H1 (cell line): ENCODE measurements at regions of chr10 and their contacts with region 1.

Region 1: DNA sequence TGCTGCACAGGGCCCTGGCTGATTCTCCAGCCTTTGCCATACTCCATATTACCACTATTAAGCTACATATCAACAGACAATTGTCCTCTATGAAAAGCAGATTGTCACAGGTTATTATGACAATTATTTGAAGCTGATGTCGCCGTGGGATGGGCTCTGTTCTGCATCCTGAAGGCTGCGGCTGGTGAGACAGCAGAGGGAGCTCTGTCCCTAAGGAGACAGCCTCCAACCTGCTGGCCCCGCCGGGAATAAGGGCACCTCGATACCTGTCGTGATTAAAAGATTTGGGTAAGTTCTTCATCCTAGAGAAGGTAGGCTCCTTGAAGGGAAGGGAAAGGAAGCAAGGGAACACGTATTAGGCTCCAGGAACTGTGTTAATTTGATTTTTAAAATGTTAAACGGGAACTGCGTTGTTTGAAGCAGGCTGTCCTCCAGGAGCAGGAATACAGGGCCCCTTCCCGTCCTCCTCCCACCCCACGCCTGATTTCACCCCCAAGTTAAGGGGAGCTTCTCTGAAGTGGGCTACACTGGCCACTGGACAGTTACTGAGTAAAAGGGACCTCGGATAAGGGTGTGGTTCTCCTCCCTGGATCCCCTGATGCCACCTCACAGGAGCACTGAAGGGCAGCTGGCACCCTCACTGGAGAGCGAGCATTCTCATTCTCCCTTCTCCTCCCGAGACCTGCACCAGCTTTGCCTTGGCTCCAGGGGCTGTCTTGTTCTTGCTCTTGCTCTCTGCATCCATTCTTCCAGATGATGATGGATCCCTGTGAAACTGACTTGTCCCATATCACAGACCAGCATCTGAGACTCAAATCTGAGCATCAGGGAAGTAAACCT is 11.8 kb upstream of the TIAL1 start:
- DNase-seq: peak in 1 of 2 experiments; percentile 64
- H3K4me3 ChIP-seq: no peak overlapping the region
- H3K27ac ChIP-seq: no peak overlapping the region
- H3K4me1 ChIP-seq: no peaks in the 10 kb centered on the region
- H3K27me3 ChIP-seq: no peaks in the 10 kb centered on the region
- CTCF ChIP-seq: peak; percentile 69 to 82 (median 76)
- EP300 ChIP-seq: no peak
- POLR2A ChIP-seq: no peak
- RAD21 ChIP-seq: peak; percentile 79 to 85

Region 2: DNA sequence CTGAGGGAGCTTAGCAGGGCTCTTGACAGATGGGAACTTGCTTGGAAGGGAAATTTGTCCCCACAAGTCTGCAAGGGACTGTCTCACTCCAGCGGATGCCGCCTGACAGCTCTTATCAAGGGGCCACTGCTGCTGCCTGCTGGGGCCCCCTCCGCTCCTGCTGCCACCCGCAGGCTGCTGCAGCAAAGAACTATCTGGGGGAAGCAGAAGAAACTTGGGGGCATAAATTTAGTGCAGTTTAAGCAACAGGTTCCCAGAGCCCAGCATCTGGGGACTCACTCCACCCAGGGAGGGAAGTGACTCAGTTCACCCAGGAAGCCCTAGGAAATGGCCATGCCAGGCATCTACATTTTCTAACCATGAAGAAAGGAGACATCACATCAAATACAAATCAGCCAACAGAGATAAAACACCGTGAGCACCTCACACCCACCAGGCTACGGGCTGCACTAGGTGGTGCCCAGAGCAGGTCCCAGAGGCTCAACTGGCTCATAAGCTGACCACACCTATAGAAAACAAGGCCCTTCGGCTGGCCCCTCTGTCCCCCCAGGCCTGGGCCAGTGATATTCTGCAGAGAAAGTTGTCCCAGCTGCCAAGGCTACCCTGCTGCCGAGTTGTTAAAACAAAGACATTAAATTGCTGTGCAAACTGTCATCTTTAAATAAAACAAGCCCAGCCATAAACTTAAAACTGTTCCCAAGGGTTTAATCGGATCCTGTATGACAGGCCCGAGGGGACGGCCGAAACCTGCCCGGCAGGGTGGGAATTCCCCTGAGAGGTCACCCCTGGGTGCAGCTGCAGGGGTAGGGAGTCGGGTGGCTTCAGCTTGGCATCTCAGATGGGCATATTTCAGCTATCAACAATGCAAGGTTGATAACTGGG is 69.7 kb before region 1 on chr10:
- CTCF ChIA-PET with region 1: no interaction called
- POLR2A ChIA-PET with region 1: no interaction called
- DNase-seq: no peak
- H3K4me3 ChIP-seq: no peak overlapping the region
- H3K27ac ChIP-seq: no peak overlapping the region
- H3K4me1 ChIP-seq: peaks cover 2 to 10% (median 8%) of the 10 kb centered on the region in 4 experiments; a peak in 6 of 7 replicates
- H3K27me3 ChIP-seq: peaks cover 17 to 38% (median 26%) of the 10 kb centered on the region in 4 experiments
- CTCF ChIP-seq: no peak
- EP300 ChIP-seq: no peak
- POLR2A ChIP-seq: no peak
- RAD21 ChIP-seq: peak in 1 of 2 experiments; percentile 13; a peak in 1 of 4 replicates

Region 3: DNA sequence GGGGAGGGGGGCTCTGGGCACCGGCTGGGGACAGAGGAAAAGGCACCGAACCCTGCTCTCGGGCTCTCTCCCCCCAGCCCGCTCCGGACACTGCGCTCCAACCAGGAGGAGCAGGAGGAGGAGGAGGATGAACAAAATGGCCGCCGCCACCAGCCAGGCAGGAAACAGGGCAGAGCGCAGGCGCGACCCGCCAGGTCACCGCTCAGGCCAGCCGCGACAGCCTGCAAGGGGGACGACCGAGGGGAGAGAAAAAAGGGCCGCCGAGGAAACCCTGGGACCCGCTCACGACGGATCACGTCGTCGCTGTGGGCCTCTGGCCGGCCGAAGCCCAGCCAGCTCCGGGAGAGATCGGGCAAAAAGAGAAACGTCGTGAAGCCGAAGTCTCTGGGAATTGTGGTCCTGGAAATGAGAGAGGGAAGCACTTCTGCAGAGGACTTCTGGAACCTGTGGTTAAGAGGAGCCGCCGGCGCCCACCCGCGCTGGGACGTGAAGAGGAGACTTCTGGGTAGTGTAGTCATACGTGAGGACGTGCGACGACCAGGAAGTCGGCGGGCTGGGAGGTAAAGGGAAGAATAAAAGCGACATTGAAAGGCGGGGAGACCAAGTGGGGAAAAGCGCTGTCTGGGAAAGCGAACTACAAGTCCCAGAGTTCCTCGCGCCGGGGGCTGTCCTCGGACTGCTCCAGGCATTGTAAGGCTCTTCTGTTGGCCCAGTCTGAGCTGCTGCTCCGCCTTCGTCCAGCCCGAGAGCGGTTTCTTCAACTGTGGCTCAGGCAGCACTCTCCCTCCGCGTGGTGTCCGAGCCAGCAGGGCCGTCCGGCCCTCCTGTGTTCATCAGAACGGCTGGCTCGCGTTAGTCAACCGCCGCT is 11.8 kb before region 1 on chr10 and contains the start of gene TIAL1:
- CTCF ChIA-PET with region 1: interaction called, 8 read pairs
- POLR2A ChIA-PET with region 1: interaction called, 11 read pairs
- DNase-seq: peak; percentile 94 to 99
- H3K4me3 ChIP-seq: peak within 1 kb of the TSS; percentile 92 to 99 (median 96)
- H3K27ac ChIP-seq: peak within 1 kb of the TSS; percentile 99
- H3K4me1 ChIP-seq: peaks cover 0 to 8% (median 5%) of the 10 kb centered on the region in 4 experiments; a peak in 4 of 7 replicates
- H3K27me3 ChIP-seq: no peaks in the 10 kb centered on the region
- CTCF ChIP-seq: no peak
- EP300 ChIP-seq: no peak
- POLR2A ChIP-seq: peak; percentile 89 to 96
- RAD21 ChIP-seq: no peak; a peak in 1 of 4 replicates
- total RNA-seq, gene TIAL1: 151 and 166 TPM in 2 replicates